Endothelial cell of umbilical vein (primary cell): ENCODE measurements at regions of chr1 and their contacts with region 1.

Region 1: GRCh38 chr1:112466078-112466660 is 42.6 kb upstream of the WNT2B start:
- DNase-seq: peak; percentile 97
- H3K4me3 ChIP-seq: peak overlapping the region in 1 of 3 experiments; percentile 5
- H3K27ac ChIP-seq: peak overlapping the region; percentile 59
- H3K4me1 ChIP-seq: peaks cover 28% of the 10 kb centered on the region
- H3K27me3 ChIP-seq: no peaks in the 10 kb centered on the region
- CTCF ChIP-seq: peak; percentile 82 to 85
- POLR2A ChIP-seq: peak; percentile 71

Region 2: GRCh38 chr1:112369392-112370285 is 96.5 kb before region 1 on chr1:
- CTCF ChIA-PET with region 1: interaction called, 10 read pairs
- POLR2A ChIA-PET with region 1: no interaction called
- dilution Hi-C with region 1: no loop called
- intact Hi-C with region 1: no loop called
- DNase-seq: peak; percentile 87
- H3K4me3 ChIP-seq: no peak overlapping the region
- H3K27ac ChIP-seq: no peak overlapping the region
- H3K4me1 ChIP-seq: no peaks in the 10 kb centered on the region
- H3K27me3 ChIP-seq: peaks cover 10 to 12% of the 10 kb centered on the region in 2 experiments
- CTCF ChIP-seq: peak; percentile 98 to 99
- POLR2A ChIP-seq: no peak

Region 3: GRCh38 chr1:112431038-112431437 is 35.1 kb before region 1 on chr1:
- CTCF ChIA-PET with region 1: interaction called, 9 read pairs
- POLR2A ChIA-PET with region 1: interaction called, 3 read pairs
- dilution Hi-C with region 1: no loop called
- intact Hi-C with region 1: loop called (anchors 1 kb)
- DNase-seq: peak; percentile 78
- H3K4me3 ChIP-seq: peak overlapping the region in 1 of 3 experiments; percentile 37
- H3K27ac ChIP-seq: peak overlapping the region; percentile 95
- H3K4me1 ChIP-seq: peaks cover 73% of the 10 kb centered on the region
- H3K27me3 ChIP-seq: no peaks in the 10 kb centered on the region
- CTCF ChIP-seq: no peak
- POLR2A ChIP-seq: no peak

Region 4: DNA sequence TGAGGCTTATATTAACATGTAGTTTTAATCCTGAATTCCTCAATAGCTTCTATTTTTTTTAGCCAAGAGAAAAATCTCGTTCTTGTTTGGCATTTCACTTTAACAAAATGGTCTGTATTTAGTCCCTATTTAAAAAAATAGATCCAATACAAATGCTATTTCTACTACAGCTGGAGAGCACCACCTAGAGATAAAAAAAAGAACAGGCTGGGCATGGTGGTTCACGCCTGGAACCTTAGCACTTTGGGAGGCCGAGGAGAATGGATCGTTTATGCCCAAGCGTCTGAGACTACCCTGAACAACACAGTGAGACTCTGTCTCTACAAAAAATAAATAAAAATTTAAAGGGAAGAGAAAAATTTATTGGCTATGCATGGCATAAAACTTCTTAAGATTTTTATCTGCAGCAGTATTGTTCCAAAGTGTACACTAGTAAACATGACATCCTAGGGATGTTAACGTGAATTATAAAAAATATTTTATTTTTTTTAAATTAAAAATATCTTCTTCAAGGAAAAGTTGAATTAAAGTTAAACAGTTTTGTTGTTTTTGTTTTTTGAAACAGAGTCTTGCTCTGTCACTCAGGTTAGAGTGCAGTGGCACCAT is 148.4 kb after region 1 on chr1:
- CTCF ChIA-PET with region 1: interaction called, 4 read pairs
- POLR2A ChIA-PET with region 1: no interaction called
- dilution Hi-C with region 1: no loop called
- intact Hi-C with region 1: loop called (anchors 1 kb)
- DNase-seq: peak; percentile 64
- H3K4me3 ChIP-seq: no peak overlapping the region
- H3K27ac ChIP-seq: no peak overlapping the region
- H3K4me1 ChIP-seq: peaks cover 14% of the 10 kb centered on the region
- H3K27me3 ChIP-seq: no peaks in the 10 kb centered on the region
- CTCF ChIP-seq: peak; percentile 40 to 49
- POLR2A ChIP-seq: no peak